ENCODE measurements at regions of chr12 and their contacts with region 1.

Region 1: DNA sequence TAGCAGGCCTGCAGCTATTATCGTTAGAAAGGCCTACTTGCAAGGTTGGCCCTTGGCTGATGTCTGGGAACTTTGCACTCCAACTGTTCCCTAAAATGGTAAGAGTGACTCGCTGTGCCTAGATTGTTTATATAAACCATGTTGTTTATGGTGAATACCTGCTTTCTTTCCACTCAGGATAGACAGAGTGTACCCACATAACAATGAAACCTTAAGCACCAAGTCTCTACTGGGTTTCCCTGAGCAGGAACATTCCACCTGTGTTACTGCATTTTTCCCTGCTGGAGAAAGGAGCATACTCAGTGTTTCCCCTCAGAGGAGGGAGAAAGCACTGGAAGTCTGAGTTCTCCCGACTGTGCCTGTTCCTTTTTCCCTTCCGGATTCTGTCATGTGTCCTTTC is 32.8 kb downstream of the ERP29 start:
- DNase-seq: no peak
- ATAC-seq: no peak
- H3K4me3 ChIP-seq: no peak overlapping the region
- H3K27ac ChIP-seq: no peak overlapping the region
- H3K4me1 ChIP-seq: no peaks in the 10 kb centered on the region
- H3K27me3 ChIP-seq: no peaks in the 10 kb centered on the region
- CTCF ChIP-seq: no peak
- EP300 ChIP-seq: no peak
- POLR2A ChIP-seq: no peak
- RAD21 ChIP-seq: no peak

Region 2: GRCh38 chr12:111643427-111643826 is 402.6 kb before region 1 on chr12:
- CTCF ChIA-PET with region 1: no interaction called
- POLR2A ChIA-PET with region 1: no interaction called
- RAD21 ChIA-PET with region 1: no interaction called
- SMC1A ChIA-PET with region 1: no interaction called
- in situ Hi-C with region 1: no loop called
- intact Hi-C with region 1: no loop called
- DNase-seq: no peak
- ATAC-seq: no peak
- H3K4me3 ChIP-seq: no peak overlapping the region
- H3K27ac ChIP-seq: no peak overlapping the region
- H3K4me1 ChIP-seq: no peaks in the 10 kb centered on the region
- H3K27me3 ChIP-seq: no peaks in the 10 kb centered on the region
- CTCF ChIP-seq: no peak
- EP300 ChIP-seq: no peak
- POLR2A ChIP-seq: no peak
- RAD21 ChIP-seq: no peak

Region 3: DNA sequence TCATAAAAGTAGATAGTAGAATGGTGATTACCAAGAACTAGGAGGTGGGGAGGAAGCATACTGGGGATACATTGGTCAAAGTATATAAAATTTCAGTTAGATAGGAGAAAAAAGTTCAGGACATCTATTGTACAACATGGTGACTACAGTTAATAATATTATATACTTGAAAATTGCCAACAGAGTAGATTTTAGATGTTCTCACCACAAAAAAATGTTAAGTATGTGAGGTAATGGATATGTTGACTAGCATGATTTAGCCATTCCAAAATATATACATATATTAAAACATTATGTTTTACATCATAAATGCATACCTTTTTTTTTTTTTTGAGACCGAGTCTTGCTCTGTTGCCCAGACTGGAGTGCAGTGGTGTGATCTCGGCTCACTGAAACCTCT is 64.0 kb before region 1 on chr12:
- CTCF ChIA-PET with region 1: no interaction called
- POLR2A ChIA-PET with region 1: no interaction called
- RAD21 ChIA-PET with region 1: no interaction called
- SMC1A ChIA-PET with region 1: no interaction called
- in situ Hi-C with region 1: no loop called
- intact Hi-C with region 1: no loop called
- DNase-seq: no peak
- ATAC-seq: no peak
- H3K4me3 ChIP-seq: no peak overlapping the region
- H3K27ac ChIP-seq: no peak overlapping the region
- H3K4me1 ChIP-seq: no peaks in the 10 kb centered on the region
- H3K27me3 ChIP-seq: no peaks in the 10 kb centered on the region
- CTCF ChIP-seq: no peak
- EP300 ChIP-seq: no peak
- POLR2A ChIP-seq: no peak
- RAD21 ChIP-seq: no peak

Region 4: GRCh38 chr12:112061137-112061536 is 15.1 kb after region 1 on chr12:
- CTCF ChIA-PET with region 1: no interaction called
- POLR2A ChIA-PET with region 1: interaction called, 11 read pairs
- RAD21 ChIA-PET with region 1: interaction called, 3 read pairs
- SMC1A ChIA-PET with region 1: interaction called, 4 read pairs
- in situ Hi-C with region 1: no loop called
- intact Hi-C with region 1: no loop called
- DNase-seq: no peak
- ATAC-seq: no peak
- H3K4me3 ChIP-seq: no peak overlapping the region
- H3K27ac ChIP-seq: no peak overlapping the region
- H3K4me1 ChIP-seq: no peaks in the 10 kb centered on the region
- H3K27me3 ChIP-seq: no peaks in the 10 kb centered on the region
- CTCF ChIP-seq: no peak
- EP300 ChIP-seq: no peak
- POLR2A ChIP-seq: no peak
- RAD21 ChIP-seq: no peak

Region 5: GRCh38 chr12:112148031-112148513 is 102.1 kb after region 1 on chr12:
- CTCF ChIA-PET with region 1: no interaction called
- POLR2A ChIA-PET with region 1: no interaction called
- RAD21 ChIA-PET with region 1: no interaction called
- SMC1A ChIA-PET with region 1: no interaction called
- in situ Hi-C with region 1: no loop called
- intact Hi-C with region 1: no loop called
- DNase-seq: no peak
- ATAC-seq: no peak
- H3K4me3 ChIP-seq: no peak overlapping the region
- H3K27ac ChIP-seq: no peak overlapping the region
- H3K4me1 ChIP-seq: peaks cover 3% of the 10 kb centered on the region; the same call in 1 of the 2 replicates
- H3K27me3 ChIP-seq: no peaks in the 10 kb centered on the region
- CTCF ChIP-seq: no peak
- EP300 ChIP-seq: no peak
- POLR2A ChIP-seq: no peak
- RAD21 ChIP-seq: no peak

Measured in GM12878 (cell line).